ENCODE measurements at regions of chr1 and their contacts with region 1.

Region 1: GRCh38 chr1:186304982-186305949 is 69.8 kb downstream of the TPR start:
- DNase-seq: peak; percentile 22
- ATAC-seq: no peak
- H3K4me3 Mint-ChIP-seq: no peak overlapping the region
- H3K27ac Mint-ChIP-seq: peak overlapping the region; percentile 76
- H3K4me1 Mint-ChIP-seq: peaks cover 57% of the 10 kb centered on the region
- H3K27me3 Mint-ChIP-seq: no peaks in the 10 kb centered on the region

Region 2: DNA sequence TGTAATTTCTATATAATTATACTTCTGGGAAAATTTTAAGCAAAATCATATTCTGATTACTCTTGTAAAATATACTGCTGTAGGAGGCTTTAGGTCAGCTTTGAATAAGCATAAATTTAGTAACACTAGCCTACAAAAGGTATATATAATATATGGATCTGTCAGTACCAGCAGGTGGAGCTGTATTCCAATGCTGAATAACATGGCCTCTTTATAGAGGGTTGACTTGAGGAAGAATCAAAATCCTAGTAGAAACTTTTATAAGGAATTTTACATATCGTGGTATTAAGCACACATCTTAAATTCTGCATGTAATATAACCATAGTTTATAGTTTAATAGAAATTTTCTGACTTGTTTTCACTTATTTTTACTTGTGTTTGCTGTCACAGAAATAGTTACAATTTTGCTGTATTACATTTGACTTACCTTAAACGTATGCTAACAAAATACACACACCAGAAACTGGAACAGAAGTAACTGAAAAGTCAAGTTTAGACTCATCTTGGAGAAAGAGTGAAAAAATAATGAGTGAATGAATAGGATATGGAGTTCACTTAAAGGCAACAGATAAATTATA is 491.8 kb before region 1 on chr1:
- CTCF ChIA-PET with region 1: no interaction called
- POLR2A ChIA-PET with region 1: no interaction called
- intact Hi-C with region 1: no loop called
- DNase-seq: peak; percentile 8
- ATAC-seq: peak; percentile 60
- H3K4me3 Mint-ChIP-seq: no peak overlapping the region
- H3K27ac Mint-ChIP-seq: no peak overlapping the region
- H3K4me1 Mint-ChIP-seq: no peaks in the 10 kb centered on the region
- H3K27me3 Mint-ChIP-seq: no peaks in the 10 kb centered on the region

Region 3: DNA sequence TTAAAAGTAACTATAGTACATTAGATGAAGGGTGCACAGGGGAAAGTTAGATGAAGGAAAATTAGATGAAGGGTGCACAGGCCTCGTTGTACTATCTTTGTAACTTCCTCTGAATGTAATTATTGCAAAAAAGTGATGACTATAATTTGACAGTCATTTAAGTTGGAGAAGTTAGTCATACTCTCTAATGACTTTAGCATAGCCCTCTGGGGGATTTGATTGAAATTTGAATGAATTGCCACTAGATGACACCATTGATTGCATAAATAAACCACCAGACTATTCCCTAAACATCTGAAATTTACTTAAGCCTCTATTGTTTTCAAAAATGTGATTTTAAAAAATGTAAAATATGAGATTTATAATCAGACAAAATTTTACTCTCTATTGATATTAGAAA is 32.8 kb before region 1 on chr1:
- CTCF ChIA-PET with region 1: interaction called, 8 read pairs
- POLR2A ChIA-PET with region 1: interaction called, 4 read pairs
- intact Hi-C with region 1: loop called (anchors 2 to 5 kb)
- DNase-seq: no peak
- ATAC-seq: peak; percentile 89
- H3K4me3 Mint-ChIP-seq: no peak overlapping the region
- H3K27ac Mint-ChIP-seq: peak overlapping the region; percentile 28
- H3K4me1 Mint-ChIP-seq: peaks cover 18% of the 10 kb centered on the region
- H3K27me3 Mint-ChIP-seq: no peaks in the 10 kb centered on the region

Region 4: GRCh38 chr1:186289943-186290545 is 15.2 kb before region 1 on chr1:
- CTCF ChIA-PET with region 1: interaction called, 36 read pairs
- POLR2A ChIA-PET with region 1: interaction called, 11 read pairs
- intact Hi-C with region 1: loop called in 1 of 2 experiments (anchors 2 kb)
- DNase-seq: no peak
- ATAC-seq: peak; percentile 75
- H3K4me3 Mint-ChIP-seq: peak overlapping the region; percentile 44
- H3K27ac Mint-ChIP-seq: peak overlapping the region; percentile 99
- H3K4me1 Mint-ChIP-seq: peaks cover 68% of the 10 kb centered on the region
- H3K27me3 Mint-ChIP-seq: no peaks in the 10 kb centered on the region

Region 5: DNA sequence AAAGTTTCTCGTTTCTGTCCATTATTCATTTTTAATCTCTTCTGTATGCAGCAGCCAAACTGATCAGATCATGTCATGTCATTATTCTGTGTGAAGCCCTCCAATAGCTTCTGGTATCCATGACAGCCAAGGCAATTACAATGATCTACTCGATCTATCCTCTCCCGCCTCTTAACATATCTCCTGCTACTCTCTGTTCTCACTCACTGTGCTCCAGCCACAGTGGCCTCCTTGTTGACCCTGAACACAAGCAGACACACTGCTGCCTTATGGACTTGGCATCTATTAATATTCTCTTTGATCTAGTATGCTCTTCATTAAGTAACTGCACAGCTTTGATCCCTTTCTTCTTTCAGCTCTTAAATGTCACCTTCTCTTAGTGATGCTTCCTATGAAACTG is 10.3 kb after region 1 on chr1:
- CTCF ChIA-PET with region 1: interaction called, 16 read pairs
- POLR2A ChIA-PET with region 1: interaction called, 3 read pairs
- intact Hi-C with region 1: loop called in 1 of 2 experiments (anchors 2 kb)
- DNase-seq: no peak
- ATAC-seq: no peak
- H3K4me3 Mint-ChIP-seq: no peak overlapping the region
- H3K27ac Mint-ChIP-seq: peak overlapping the region; percentile 40
- H3K4me1 Mint-ChIP-seq: peaks cover 4% of the 10 kb centered on the region
- H3K27me3 Mint-ChIP-seq: no peaks in the 10 kb centered on the region

Region 6: GRCh38 chr1:186620951-186621350 is 315.7 kb after region 1 on chr1:
- CTCF ChIA-PET with region 1: no interaction called
- POLR2A ChIA-PET with region 1: no interaction called
- intact Hi-C with region 1: no loop called
- DNase-seq: peak; percentile 27
- ATAC-seq: peak; percentile 52
- H3K4me3 Mint-ChIP-seq: no peak overlapping the region
- H3K27ac Mint-ChIP-seq: no peak overlapping the region
- H3K4me1 Mint-ChIP-seq: peaks cover 20% of the 10 kb centered on the region
- H3K27me3 Mint-ChIP-seq: peaks cover 13% of the 10 kb centered on the region

Measured in activated CD4-positive, alpha-beta T cell treated with anti-CD3 and anti-CD28 coated beads for 36 hours (primary cell).